Gastrocnemius medialis (tissue), 4 donors: ENCODE measurements at regions of chr11 and their contacts with region 1.

Region 1: DNA sequence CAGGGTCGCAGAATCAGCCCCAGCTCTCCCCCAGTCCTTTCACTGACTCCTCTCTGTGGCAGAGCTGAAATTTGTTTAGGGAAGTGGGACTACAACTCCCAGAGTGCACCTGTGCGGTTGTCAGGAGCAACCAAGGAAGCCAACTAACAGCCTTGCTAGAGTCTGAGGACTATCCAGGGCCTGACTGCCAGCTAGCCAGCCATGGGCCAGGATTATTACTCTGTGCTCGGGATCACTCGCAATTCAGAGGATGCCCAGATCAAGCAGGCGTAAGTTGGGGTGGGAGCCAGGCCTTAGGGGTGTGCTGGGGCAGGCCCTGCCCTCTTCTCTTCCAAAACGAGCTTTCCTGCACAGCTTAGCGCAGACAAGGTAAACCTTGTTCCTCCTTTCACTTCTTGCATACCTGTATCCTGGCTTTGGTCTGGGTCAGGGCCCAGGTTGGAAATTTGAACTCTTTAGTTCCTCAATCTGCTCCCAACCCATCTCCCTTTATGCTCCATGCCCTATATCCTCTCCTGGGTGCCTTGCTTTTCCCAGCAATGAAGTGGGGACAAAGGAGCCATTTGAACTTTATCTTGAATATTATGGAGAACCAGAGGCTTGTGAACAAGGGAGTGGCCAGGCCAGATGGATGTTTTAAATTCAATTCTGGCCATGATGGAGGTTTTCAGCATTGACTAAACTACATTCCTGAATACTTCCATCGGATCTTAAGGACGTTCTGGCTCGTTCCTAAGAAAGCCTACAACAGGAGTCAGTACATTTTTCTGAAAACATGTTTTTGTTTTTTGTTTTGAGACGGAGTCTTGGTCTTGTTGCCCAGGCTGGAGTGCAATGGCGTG is at the start of gene DNAJB13:
- DNase-seq: no peak
- ATAC-seq: peak in 1 of 2 donors; percentile 55
- H3K4me3 ChIP-seq: no peak within 1 kb of the TSS
- H3K27ac ChIP-seq: no peak within 1 kb of the TSS
- H3K4me1 ChIP-seq: no peaks in the 10 kb centered on the region
- H3K27me3 ChIP-seq: no peaks in the 10 kb centered on the region
- CTCF ChIP-seq: no peak
- POLR2A ChIP-seq: no peak
- total RNA-seq, gene DNAJB13: not detected

Region 2: DNA sequence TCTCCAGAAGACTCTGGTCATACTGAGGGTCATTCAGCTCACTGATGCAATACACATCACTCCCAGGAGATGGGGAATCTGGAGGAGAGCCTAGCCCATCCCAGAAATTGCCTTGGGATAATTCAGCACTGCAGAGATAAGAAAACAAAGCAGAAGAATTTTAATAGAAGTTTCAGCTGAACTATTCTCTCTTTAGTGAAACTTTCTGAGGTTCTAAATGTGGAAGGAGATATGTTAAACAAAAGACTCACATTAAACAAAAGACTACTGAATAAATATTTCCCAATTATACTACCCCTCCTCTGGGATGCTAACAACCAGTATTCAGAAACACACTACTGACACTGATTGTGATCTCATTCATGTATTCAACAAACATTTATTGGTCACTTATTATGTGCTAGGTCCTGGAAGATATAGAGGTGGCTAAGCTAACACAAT is 171.9 kb after region 1 on chr11:
- in situ Hi-C with region 1: no loop called
- intact Hi-C with region 1: no loop called
- DNase-seq: no peak
- ATAC-seq: no peak
- H3K4me3 ChIP-seq: no peak overlapping the region
- H3K27ac ChIP-seq: no peak overlapping the region
- H3K4me1 ChIP-seq: no peaks in the 10 kb centered on the region
- H3K27me3 ChIP-seq: no peaks in the 10 kb centered on the region
- CTCF ChIP-seq: no peak
- POLR2A ChIP-seq: no peak

Region 3: GRCh38 chr11:74154621-74155281 is 203.7 kb after region 1 on chr11:
- in situ Hi-C with region 1: no loop called
- intact Hi-C with region 1: no loop called
- DNase-seq: no peak
- ATAC-seq: peak in 1 of 2 donors; percentile 39
- H3K4me3 ChIP-seq: no peak overlapping the region
- H3K27ac ChIP-seq: no peak overlapping the region
- H3K4me1 ChIP-seq: peaks cover 0 to 13% of the 10 kb centered on the region in 2 donors
- H3K27me3 ChIP-seq: no peaks in the 10 kb centered on the region
- CTCF ChIP-seq: no peak
- POLR2A ChIP-seq: no peak

Region 4: DNA sequence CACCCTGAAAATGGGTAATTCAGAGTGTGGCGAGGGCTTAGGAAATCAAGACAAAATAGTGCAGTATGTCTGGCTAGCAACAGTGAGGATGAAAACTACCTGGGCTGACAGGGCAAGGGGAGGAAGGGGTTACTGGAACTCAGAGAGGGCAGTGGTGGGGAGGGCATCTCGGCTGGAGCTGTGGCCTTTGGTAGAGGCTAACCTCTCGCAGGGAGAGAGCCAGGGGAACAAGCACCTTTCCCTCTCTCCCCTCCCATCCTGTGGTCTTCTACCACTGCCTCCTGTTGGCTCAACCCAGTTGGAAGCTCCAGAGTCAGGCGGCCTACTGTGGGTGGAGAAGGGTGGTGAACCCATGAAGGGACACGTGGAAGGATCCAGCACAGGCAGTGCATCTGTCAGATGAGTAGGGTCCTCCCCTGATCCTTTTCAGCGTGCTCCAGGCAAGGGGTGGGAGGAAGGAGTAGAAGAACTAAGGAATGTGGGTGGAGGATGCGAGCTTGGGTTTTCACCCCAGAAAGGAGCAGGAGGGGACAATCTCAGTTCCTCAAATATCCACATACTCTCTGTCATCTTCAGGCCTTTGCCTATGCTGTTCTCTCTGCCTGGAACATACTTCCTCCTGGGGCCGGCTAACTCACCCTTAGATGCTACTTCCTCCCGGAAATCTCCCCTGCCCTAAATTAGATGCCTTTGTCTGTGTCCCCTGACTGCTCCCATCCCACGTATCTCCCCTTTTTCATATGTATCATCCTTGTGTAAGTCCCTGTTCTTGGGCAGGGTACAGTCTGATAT is 522.5 kb after region 1 on chr11:
- in situ Hi-C with region 1: no loop called
- intact Hi-C with region 1: loop called (anchors 10 kb)
- DNase-seq: no peak
- ATAC-seq: no peak
- H3K4me3 ChIP-seq: no peak overlapping the region
- H3K27ac ChIP-seq: no peak overlapping the region
- H3K4me1 ChIP-seq: no peaks in the 10 kb centered on the region
- H3K27me3 ChIP-seq: no peaks in the 10 kb centered on the region
- CTCF ChIP-seq: no peak
- POLR2A ChIP-seq: no peak